ENCODE measurements at regions of chr5 and their contacts with region 1.

Region 1: GRCh38 chr5:159106569-159107282 is 7.0 kb upstream of the EBF1 start:
- DNase-seq: no peak
- H3K4me3 ChIP-seq: peak overlapping the region; percentile 43
- CTCF ChIP-seq: peak; percentile 90

Region 2: DNA sequence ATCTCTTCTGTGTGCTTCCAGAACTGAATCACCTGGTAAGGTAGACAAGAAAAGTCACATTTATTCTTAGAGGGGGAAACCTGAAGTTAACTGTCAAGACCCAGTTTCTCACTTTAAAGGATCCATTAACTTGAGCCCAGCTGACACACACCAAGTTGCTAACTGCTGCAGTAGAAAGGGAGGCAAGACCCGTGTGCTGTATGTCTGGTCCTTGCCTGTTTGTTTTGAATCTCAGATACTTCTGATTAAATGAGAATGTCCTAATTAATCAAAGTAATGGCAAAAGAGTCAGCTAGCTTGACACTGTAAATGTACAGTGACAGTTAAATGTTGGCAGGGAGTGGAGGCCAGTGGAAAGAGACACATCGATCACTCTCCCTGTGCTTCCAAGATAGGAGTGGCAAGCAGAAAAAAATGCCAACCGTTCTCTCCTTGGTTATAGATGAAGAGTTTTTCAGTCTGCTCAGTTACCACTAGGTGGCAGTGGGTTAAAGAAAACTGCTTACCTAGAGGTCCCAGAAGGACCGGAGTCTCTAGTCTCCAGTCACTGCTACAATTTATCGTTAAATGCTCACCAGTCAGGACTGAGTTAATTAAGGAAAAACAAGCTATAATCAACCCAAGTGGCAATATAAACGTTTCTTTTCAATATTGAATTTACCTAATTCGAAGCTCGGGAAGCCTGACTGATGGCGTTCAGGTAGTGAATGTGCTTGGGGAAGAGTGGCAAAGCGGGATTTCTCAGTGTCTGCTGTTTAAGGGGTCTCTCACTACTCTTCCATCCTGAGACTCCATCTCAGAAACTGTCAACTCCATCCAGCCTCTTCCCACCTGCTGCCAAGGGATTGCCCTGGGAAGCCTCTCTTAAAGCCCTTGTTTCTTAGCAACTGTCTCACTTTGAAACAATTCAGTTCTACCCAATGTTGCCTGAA is 1344.8 kb before region 1 on chr5:
- CTCF ChIA-PET with region 1: interaction called, 10 read pairs
- POLR2A ChIA-PET with region 1: no interaction called
- DNase-seq: no peak
- H3K4me3 ChIP-seq: no peak overlapping the region
- CTCF ChIP-seq: peak; percentile 69

Region 3: DNA sequence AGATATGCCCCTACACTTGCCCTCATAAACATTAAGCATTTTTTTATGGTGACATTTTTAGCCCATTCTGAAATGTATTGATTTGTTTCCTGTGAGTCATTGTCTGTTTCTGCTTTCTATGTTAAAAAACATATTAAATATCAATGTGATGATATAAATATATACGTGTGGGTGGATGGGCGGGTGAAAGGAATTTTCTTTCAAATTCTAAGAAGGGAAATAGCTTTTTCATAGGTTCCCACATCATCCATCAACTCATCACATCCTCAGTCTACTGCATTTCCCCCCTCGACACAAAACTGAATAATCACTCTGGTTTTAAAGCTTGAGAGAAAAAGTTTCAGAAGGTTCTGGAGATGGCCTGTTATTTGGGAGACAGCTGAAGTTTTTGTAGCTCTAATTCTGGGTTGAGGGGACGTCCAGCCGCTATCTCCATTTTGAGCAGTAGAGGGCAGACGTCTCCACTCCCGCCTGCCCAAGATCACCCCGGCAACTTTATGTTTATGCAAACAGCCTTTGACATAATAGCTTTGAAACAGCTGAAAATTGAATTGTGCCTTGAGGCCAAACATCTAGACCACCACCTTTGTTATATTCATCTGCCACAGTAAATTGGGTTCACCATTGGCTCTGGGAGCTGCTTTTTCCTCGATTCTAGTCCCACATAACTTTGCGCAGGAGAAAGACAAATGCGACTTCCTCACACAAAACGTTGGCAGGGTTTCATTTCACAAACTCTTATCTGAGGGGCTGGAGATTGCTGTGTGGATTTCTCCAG is 1031.5 kb before region 1 on chr5:
- CTCF ChIA-PET with region 1: interaction called, 37 read pairs
- POLR2A ChIA-PET with region 1: no interaction called
- DNase-seq: peak; percentile 19
- H3K4me3 ChIP-seq: peak overlapping the region; percentile 2; the same call in 1 of the 2 replicates
- CTCF ChIP-seq: peak; percentile 79

Region 4: GRCh38 chr5:158174918-158175851 is 931.5 kb before region 1 on chr5:
- CTCF ChIA-PET with region 1: interaction called, 74 read pairs
- POLR2A ChIA-PET with region 1: no interaction called
- DNase-seq: peak; percentile 28
- H3K4me3 ChIP-seq: no peak overlapping the region
- CTCF ChIP-seq: peak; percentile 81

Region 5: GRCh38 chr5:158995694-158996173 is 111.0 kb before region 1 on chr5:
- CTCF ChIA-PET with region 1: no interaction called
- POLR2A ChIA-PET with region 1: no interaction called
- DNase-seq: no peak
- H3K4me3 ChIP-seq: no peak overlapping the region
- CTCF ChIP-seq: no peak

Region 6: DNA sequence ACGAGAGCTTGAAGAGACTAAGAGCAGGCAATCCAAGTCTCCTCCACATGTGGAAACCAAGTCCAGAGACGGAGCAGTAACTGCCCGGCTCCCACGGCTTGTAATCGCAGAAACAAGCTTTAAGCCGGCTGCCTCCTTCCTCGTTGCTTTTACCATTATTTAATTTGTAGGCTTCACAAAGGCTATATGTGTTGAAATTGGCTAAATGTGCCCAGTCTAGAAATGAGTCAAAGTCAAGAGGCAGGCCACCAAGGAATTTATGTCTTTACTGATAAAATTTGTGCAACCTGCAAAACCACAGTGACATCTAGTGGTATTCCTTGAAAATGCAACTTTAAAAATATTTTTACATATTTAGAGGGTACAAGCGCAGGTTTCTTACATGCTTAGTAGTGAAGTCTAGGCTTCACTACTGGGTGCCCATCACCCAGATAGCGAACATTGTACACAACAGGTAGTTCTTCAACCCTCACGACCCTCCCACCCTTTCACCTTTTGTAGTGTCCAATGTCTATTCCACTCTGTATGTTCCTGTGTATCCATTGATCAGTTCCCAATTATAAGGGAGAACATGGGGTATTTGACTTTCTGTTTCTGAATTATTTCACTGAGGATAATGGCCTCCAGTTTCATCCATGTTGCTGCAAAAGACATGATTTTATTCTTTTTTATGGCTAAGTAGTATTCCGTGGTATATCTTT is 26.5 kb after region 1 on chr5:
- CTCF ChIA-PET with region 1: interaction called, 23 read pairs
- POLR2A ChIA-PET with region 1: no interaction called
- DNase-seq: peak; percentile 40
- H3K4me3 ChIP-seq: no peak overlapping the region
- CTCF ChIP-seq: peak; percentile 50

Region 7: GRCh38 chr5:159274676-159275075 is 167.9 kb after region 1 on chr5:
- CTCF ChIA-PET with region 1: no interaction called
- POLR2A ChIA-PET with region 1: no interaction called
- DNase-seq: no peak
- H3K4me3 ChIP-seq: no peak overlapping the region
- CTCF ChIP-seq: no peak

Region 8: DNA sequence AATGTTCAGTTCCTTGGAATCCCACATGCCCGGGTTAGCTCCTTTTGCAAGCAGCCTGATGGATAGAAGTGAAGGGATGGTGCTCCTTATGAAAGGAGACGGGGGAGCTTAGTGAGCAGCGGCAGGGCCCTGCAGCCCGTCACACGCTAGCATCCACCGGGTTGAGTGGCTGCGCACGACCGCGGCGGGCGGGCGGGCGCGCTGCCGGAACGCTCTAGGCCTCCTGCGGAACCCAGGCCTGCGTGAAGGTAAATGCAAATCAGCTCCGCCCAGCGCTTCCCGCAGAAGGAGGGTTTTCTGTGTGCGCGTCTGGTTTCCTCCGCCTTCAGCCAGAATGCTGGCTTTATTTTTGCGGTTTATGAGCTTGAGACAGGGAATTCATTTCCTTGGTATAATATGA is 203.8 kb after region 1 on chr5:
- CTCF ChIA-PET with region 1: no interaction called
- POLR2A ChIA-PET with region 1: no interaction called
- DNase-seq: no peak
- H3K4me3 ChIP-seq: no peak overlapping the region
- CTCF ChIP-seq: no peak